ENCODE measurements at regions of chr2 and their contacts with region 1.

Region 1: DNA sequence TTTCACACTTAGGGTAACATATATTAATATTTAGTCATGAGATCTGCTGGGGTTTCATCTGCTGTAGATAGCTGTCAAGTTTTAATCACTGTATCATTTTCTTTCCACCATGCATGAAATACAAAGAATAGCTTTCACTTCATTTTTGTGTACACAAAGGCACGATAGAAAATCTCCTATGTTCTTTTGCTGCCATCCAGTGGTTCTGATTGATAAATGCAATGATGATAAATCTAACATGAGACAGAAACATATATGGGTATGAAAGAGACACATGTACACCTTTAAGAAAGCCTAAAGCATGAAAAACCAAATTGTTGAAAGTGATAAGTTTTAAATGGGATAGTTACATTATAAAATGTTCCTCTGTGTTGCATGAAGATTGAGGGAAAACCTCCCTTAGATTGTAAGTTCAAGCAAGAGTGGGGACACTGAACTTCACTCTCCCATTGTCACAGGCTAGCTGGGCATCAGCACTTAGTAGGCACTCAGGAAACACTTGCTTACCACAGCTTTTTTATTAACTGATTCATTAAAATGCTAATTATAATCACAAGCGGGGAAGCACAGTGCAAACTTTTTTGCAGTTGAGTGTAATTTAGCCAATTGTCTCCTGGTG is 31.2 kb downstream of the C1D start:
- DNase-seq: peak; percentile 38 to 64 (median 42)
- ATAC-seq: peak; percentile 87
- H3K4me3 ChIP-seq: no peak overlapping the region
- H3K27ac ChIP-seq: no peak overlapping the region
- H3K4me1 ChIP-seq: no peaks in the 10 kb centered on the region; a peak in 1 of 5 replicates
- H3K27me3 ChIP-seq: no peaks in the 10 kb centered on the region
- CTCF ChIP-seq: peak; percentile 43 to 81 (median 51); a peak in 4 of 6 replicates
- EP300 ChIP-seq: no peak
- POLR2A ChIP-seq: no peak
- RAD21 ChIP-seq: peak; percentile 91 to 92

Region 2: DNA sequence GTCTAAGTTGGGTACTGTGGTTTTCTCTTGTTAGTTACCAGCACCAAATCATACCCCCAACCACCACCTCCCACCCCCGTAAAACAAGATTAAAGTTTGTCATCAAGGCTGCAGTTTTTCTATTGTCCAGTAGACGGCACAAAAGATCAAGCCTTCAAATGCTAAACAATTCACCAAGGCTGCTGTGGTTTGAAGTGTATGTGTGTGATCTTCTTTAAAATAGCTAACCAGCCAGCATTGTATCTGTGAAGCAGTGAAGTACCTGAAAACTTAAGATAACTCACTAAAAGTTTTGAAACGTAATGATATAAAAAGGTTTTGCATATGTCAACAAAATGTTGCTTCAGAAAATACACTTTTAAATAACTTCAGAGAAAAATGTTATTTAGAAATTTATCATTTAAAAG is 1602.6 kb before region 1 on chr2:
- CTCF ChIA-PET with region 1: no interaction called
- POLR2A ChIA-PET with region 1: no interaction called
- in situ Hi-C with region 1: no loop called
- intact Hi-C with region 1: loop called (anchors 5 kb)
- DNase-seq: peak; percentile 36 to 73 (median 45)
- ATAC-seq: peak; percentile 27; the same call in 2 of the 3 replicates
- H3K4me3 ChIP-seq: no peak overlapping the region
- H3K27ac ChIP-seq: no peak overlapping the region
- H3K4me1 ChIP-seq: peaks cover 0 to 30% of the 10 kb centered on the region in 2 experiments; a peak in 3 of 5 replicates
- H3K27me3 ChIP-seq: peaks cover 13 to 23% of the 10 kb centered on the region in 2 experiments; a peak in 4 of 5 replicates
- CTCF ChIP-seq: peak; percentile 77 to 90 (median 79)
- EP300 ChIP-seq: no peak
- POLR2A ChIP-seq: no peak
- RAD21 ChIP-seq: peak; percentile 97 to 98

Region 3: DNA sequence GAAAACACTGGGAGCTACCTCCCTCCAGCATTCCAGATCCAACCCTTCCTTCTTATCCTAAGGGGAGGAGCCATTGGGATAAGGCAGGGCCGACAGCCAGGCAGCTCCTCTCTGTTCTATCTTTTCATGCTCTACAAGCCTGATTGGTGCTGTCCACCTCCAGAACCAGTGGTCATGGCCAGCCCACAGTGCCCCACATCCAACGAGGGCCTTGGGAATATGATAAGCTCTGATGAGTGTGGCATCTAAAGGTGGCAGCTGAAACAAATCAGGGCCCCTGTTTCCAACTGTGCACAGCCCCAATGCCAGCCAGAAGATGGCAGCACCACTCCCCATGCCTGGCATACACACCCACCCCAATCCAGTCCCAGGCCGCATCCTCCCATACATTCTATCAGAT is 298.1 kb before region 1 on chr2:
- CTCF ChIA-PET with region 1: no interaction called
- POLR2A ChIA-PET with region 1: no interaction called
- in situ Hi-C with region 1: no loop called
- intact Hi-C with region 1: loop called (anchors 10 kb)
- DNase-seq: peak in 2 of 4 experiments; percentile 2 to 10
- ATAC-seq: peak; percentile 51; the same call in 1 of the 3 replicates
- H3K4me3 ChIP-seq: no peak overlapping the region
- H3K27ac ChIP-seq: no peak overlapping the region
- H3K4me1 ChIP-seq: no peaks in the 10 kb centered on the region
- H3K27me3 ChIP-seq: no peaks in the 10 kb centered on the region
- CTCF ChIP-seq: peak in 2 of 3 experiments; percentile 1 to 24; a peak in 2 of 6 replicates
- EP300 ChIP-seq: no peak
- POLR2A ChIP-seq: no peak
- RAD21 ChIP-seq: no peak

Region 4: DNA sequence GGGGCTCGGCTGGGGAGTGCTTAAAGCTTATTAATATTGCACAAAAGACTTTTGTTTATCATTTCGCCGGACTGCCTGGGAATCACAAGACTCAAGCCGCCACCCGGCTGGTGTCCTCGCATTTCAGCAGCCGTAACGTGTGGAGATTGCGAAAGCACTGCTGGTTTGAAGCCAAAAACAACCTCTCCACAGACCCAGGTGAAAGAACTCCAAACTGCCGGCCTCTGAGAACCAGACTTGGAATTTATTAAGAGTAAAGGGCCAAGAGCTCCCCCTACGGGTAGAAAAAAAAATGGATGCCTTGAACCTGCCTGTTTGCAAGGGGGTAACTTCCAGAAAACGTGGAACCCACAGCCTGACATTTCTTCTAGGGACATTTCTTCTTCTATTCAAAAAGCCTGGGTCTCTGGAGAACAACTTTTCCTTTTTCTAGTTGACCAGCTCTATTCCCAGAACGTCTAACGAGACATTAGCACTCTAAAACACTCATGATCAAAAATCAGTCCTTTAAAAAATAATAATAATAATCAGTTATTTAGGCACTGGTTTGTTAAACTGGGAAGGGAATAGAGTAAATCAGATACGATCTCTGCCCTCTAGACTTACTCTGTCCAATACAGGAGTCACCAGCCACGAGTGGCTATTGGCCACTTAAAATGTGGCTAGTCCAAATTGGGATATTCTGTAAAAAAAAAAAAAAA is 185.1 kb before region 1 on chr2:
- CTCF ChIA-PET with region 1: no interaction called
- POLR2A ChIA-PET with region 1: no interaction called
- in situ Hi-C with region 1: no loop called
- intact Hi-C with region 1: loop called (anchors 1 kb)
- DNase-seq: peak; percentile 67 to 72 (median 70)
- ATAC-seq: peak; percentile 94
- H3K4me3 ChIP-seq: no peak overlapping the region
- H3K27ac ChIP-seq: no peak overlapping the region
- H3K4me1 ChIP-seq: no peaks in the 10 kb centered on the region
- H3K27me3 ChIP-seq: 0 out of 5 replicates have a peak, but pooled peaks cover 0 to 2% of the 10 kb centered on the region in 2 experiments
- CTCF ChIP-seq: peak; percentile 66 to 83 (median 75)
- EP300 ChIP-seq: no peak
- POLR2A ChIP-seq: no peak
- RAD21 ChIP-seq: peak; percentile 35 to 67

Region 5: GRCh38 chr2:67938053-67938452 is 93.6 kb before region 1 on chr2:
- CTCF ChIA-PET with region 1: no interaction called
- POLR2A ChIA-PET with region 1: no interaction called
- in situ Hi-C with region 1: no loop called
- intact Hi-C with region 1: loop called (anchors 5 kb)
- DNase-seq: no peak
- ATAC-seq: no peak
- H3K4me3 ChIP-seq: no peak overlapping the region
- H3K27ac ChIP-seq: no peak overlapping the region
- H3K4me1 ChIP-seq: no peaks in the 10 kb centered on the region
- H3K27me3 ChIP-seq: peaks cover 0 to 2% of the 10 kb centered on the region in 2 experiments; a peak in 4 of 5 replicates
- CTCF ChIP-seq: no peak
- EP300 ChIP-seq: no peak
- POLR2A ChIP-seq: no peak
- RAD21 ChIP-seq: no peak